ENCODE measurements at regions of chr16 and their contacts with region 1.

Region 1: DNA sequence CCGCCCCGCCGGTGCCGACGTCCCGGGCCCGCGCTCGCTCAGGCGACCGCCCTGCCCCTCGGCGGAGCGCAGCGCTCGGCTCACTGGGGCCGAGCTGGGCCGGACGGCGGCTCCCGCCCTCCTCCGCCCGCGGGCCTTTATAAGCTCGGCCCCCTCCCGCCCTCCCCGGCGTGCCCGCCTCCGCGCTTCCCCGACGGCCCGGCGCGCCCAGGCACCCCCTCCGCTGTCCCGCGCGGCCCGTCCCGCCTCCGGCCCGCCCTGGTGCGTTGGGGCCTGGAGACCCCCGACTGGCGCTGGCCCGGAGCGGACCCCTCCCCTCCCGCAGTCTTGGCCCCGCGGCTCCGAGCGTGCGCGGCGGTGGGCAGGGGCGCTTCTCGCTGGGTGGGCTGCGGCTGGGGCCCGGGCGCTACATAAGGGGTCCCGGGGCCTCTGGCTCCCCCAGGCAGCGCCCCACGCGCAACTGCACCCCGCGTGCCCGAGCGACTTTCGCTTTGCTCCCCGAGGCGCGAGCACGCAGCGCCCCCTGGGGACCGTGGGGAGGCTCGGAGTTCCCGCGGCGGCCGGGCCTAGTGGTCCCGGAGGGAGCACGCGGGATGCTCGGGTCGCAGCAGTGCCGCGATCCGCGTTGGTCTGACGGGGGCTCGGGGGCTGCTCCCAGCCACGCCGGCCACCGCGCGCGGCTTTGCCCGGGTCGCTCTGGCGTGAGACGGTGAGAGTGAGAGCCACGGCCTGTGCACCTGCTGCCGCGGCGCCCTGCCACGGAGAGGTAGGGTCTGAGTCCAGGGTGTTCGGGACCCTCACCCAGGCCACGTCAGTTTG is at the start of gene PIEZO1:
- DNase-seq: peak; percentile 67 to 97 (median 81)
- ATAC-seq: peak; percentile 68
- H3K4me3 ChIP-seq: peak within 1 kb of the TSS; percentile 47 to 70
- H3K27ac ChIP-seq: peak within 1 kb of the TSS; percentile 89 to 90
- H3K4me1 ChIP-seq: peaks cover 35 to 57% of the 10 kb centered on the region in 2 donors
- H3K27me3 ChIP-seq: no peaks in the 10 kb centered on the region
- CTCF ChIP-seq: peak; percentile 89 to 94
- polyA plus RNA-seq, gene PIEZO1: 75.3 to 129 (median 91.9) TPM

Region 2: DNA sequence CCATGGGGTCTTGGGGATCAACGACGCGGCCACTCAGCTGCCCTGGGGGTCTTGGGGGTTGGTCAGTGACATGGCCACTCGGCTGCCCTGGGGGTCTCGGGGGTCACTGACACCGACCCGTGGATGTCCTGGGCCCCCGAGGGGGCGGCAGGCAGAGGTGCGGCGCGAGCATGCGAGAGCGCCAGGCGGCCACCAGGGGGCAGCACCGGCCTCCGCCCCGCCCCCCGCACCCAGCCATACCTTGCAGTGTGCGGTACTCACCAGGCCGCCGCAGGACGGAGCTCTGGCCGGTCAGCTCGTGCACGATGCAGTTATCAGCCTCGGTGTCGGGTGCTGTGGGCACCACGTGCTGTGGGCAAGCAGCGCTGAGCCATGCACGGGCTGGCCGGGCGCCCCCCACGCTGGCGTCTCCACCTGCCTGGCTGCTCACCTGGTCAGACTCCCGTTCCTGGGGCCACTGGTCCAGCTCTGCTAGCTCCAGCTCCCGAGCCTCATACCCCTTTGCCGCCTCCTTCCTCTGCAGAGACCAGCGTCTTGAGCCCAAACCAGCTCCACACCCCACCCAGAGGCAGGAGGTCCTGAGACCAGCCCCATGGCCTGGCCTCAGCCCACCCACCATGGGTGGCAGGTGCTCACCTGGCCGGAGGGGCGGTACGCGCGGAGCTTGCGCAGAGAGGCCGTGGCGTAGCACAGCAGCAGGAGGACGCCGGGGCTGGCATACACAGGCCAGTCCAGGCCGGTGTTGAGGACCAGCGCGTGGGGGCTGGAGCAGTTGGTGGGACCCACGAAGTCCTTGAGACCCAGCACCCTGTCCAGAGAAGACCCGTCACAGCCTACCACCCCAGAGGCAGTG is 47.8 kb before region 1 on chr16:
- intact Hi-C with region 1: loop called (anchors 5 kb)
- DNase-seq: peak; percentile 42 to 94 (median 72)
- ATAC-seq: peak; percentile 88
- H3K4me3 ChIP-seq: no peak overlapping the region
- H3K27ac ChIP-seq: no peak overlapping the region
- H3K4me1 ChIP-seq: peaks cover 0 to 6% of the 10 kb centered on the region in 2 donors
- H3K27me3 ChIP-seq: no peaks in the 10 kb centered on the region
- CTCF ChIP-seq: peak; percentile 98 to 100

Region 3: DNA sequence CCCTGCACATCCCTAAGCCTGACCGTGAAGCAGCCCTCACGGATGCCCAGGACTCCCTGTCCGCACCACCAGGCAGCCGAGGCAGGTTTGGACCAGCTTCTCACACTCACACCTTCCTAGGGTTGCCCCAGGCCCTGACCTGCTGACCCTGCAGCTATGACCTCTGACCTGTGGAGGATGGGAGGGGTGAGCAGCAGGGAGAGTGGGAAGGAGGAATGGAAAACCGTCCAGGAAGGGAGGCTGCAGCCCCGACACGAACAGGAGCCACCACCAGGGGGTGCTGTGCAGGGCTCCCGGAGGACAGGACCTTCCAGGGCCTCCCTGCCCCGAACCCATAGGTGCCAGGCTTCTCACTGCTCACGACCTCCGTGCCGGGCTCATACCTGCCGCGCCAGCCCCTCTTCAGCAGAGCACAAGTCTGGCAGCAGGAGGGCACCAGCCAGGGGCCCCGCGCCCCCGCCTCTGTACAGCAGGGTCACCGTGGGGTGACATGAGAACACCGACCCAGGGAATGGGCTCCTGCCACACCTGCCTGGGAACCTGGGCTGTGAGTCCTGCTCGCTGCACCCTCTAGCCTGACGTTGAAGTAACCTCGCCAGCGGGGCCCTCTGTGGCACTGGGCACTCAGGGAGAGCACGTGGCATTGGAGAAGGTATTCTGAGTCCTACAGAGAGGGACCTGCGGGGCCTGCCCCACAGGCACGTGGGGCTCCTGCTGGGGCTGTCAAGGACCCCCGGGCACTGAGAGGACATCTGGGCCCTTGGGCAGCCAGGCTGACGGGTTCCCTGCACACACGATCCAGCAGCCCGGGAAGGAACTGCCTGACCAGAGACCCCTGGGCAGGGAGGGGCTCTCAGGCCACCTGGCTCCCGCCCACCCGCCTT is 41.4 kb before region 1 on chr16:
- intact Hi-C with region 1: loop called (anchors 5 kb)
- DNase-seq: peak; percentile 46 to 96 (median 78)
- ATAC-seq: peak; percentile 89
- H3K4me3 ChIP-seq: no peak overlapping the region
- H3K27ac ChIP-seq: no peak overlapping the region
- H3K4me1 ChIP-seq: peaks cover 5 to 30% of the 10 kb centered on the region in 2 donors
- H3K27me3 ChIP-seq: no peaks in the 10 kb centered on the region
- CTCF ChIP-seq: peak; percentile 87 to 95

Region 4: GRCh38 chr16:89132291-89133005 is 347.1 kb after region 1 on chr16:
- intact Hi-C with region 1: no loop called
- DNase-seq: peak in 1 of 4 donors; percentile 29
- ATAC-seq: no peak
- H3K4me3 ChIP-seq: no peak overlapping the region
- H3K27ac ChIP-seq: no peak overlapping the region
- H3K4me1 ChIP-seq: no peaks in the 10 kb centered on the region
- H3K27me3 ChIP-seq: no peaks in the 10 kb centered on the region
- CTCF ChIP-seq: no peak